ENCODE measurements at regions of chr5 and their contacts with region 1.

Region 1: GRCh38 chr5:68711293-68712200 is 382.3 kb upstream of the SLC30A5 start:
- DNase-seq: no peak
- H3K4me3 ChIP-seq: no peak overlapping the region
- H3K27ac ChIP-seq: no peak overlapping the region
- H3K4me1 ChIP-seq: no peaks in the 10 kb centered on the region
- H3K27me3 ChIP-seq: no peaks in the 10 kb centered on the region
- CTCF ChIP-seq: no peak
- EP300 ChIP-seq: no peak
- POLR2A ChIP-seq: no peak

Region 2: DNA sequence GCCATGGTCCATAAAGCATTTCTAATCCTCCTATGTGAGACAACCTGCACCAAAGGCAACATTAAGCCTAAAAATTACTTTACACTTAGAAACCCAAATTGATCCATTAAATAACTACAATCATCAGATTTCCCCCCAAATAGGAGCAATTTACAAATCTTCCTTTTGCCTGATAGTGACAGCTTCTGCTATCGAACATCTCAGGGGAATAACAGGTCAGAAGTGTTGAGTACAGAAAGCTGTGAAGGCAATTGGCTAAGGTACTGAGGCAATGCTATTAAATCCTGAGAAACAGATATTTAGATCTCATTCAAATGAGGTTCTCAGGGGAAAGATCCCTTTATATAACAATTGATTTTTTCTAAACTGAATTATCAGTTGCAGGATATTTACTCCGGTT is 354.9 kb before region 1 on chr5:
- intact Hi-C with region 1: no loop called
- DNase-seq: no peak
- H3K4me3 ChIP-seq: no peak overlapping the region
- H3K27ac ChIP-seq: no peak overlapping the region
- H3K4me1 ChIP-seq: no peaks in the 10 kb centered on the region
- H3K27me3 ChIP-seq: no peaks in the 10 kb centered on the region
- CTCF ChIP-seq: no peak
- EP300 ChIP-seq: no peak
- POLR2A ChIP-seq: no peak

Region 3: DNA sequence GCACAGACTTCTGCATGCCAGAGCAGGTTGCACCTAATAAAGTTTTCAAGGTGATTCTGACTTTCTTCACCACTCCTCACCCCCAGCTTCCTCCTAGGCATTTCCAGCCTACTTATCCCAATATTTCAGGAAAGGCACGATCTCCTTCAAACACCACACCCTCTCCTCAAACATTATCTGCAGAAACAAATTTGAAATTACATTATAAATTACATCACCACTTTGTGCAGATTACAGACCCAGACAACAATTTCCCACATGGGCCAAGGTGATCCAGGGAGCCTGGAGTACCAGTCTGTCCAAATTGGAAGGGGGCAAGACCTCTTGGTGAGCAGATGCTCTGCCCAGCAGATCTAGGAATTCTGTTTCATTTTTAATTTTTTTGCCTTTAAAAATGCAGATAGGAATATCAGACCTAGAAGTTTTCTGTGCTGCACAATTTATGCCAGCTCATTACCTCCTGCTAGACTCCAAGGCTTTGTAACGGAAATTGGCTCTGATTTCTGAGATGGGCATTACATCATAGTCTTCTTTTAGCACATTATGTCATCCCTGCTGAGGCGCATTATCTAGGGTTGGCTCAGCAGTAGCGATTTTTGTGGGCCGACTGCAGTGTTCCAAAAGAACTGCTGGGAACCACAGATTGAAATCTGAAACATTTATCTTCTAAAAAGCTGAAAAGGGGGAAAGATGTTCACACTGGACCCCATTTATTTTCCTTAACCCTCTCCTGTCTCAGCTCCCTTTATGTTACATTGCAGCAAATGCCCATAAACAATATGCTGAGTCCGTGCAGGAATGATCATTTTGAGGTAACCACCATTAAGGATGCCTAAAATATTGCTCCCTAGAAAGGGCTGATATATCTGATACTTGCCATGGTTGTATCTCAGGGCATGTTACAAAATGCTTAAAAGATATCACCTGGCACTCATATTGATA is 19.1 kb after region 1 on chr5:
- intact Hi-C with region 1: loop called in 1 of 4 experiments (anchors 2 kb)
- DNase-seq: peak; percentile 26 to 44 (median 41)
- H3K4me3 ChIP-seq: no peak overlapping the region
- H3K27ac ChIP-seq: no peak overlapping the region
- H3K4me1 ChIP-seq: peaks cover 1% of the 10 kb centered on the region
- H3K27me3 ChIP-seq: no peaks in the 10 kb centered on the region
- CTCF ChIP-seq: no peak
- EP300 ChIP-seq: no peak
- POLR2A ChIP-seq: no peak

Measured in ovary (tissue), 10 donors.